ENCODE measurements at regions of chr4 and their contacts with region 1.

Region 1: GRCh38 chr4:41814565-41814964 is 66.0 kb upstream of the PHOX2B start:
- DNase-seq: peak in 1 of 2 experiments; percentile 58
- H3K4me3 ChIP-seq: no peak overlapping the region
- H3K27ac ChIP-seq: no peak overlapping the region
- H3K4me1 ChIP-seq: no peaks in the 10 kb centered on the region
- H3K27me3 ChIP-seq: no peaks in the 10 kb centered on the region
- CTCF ChIP-seq: peak; percentile 61 to 78 (median 68)
- EP300 ChIP-seq: no peak
- POLR2A ChIP-seq: no peak
- RAD21 ChIP-seq: peak; percentile 73 to 75

Region 2: GRCh38 chr4:41692717-41693345 is 121.7 kb before region 1 on chr4:
- CTCF ChIA-PET with region 1: interaction called, 19 read pairs
- POLR2A ChIA-PET with region 1: no interaction called
- DNase-seq: peak; percentile 25 to 72
- H3K4me3 ChIP-seq: peak overlapping the region in 1 of 4 experiments; percentile 19; a peak in 1 of 8 replicates
- H3K27ac ChIP-seq: no peak overlapping the region
- H3K4me1 ChIP-seq: no peaks in the 10 kb centered on the region
- H3K27me3 ChIP-seq: no peaks in the 10 kb centered on the region
- CTCF ChIP-seq: peak; percentile 86 to 92 (median 88)
- EP300 ChIP-seq: no peak
- POLR2A ChIP-seq: no peak
- RAD21 ChIP-seq: peak; percentile 96 to 97

Region 3: GRCh38 chr4:41791557-41791956 is 23.0 kb before region 1 on chr4:
- CTCF ChIA-PET with region 1: interaction called, 21 read pairs
- POLR2A ChIA-PET with region 1: interaction called, 3 read pairs
- DNase-seq: no peak
- H3K4me3 ChIP-seq: no peak overlapping the region
- H3K27ac ChIP-seq: no peak overlapping the region
- H3K4me1 ChIP-seq: peaks cover 3 to 9% (median 7%) of the 10 kb centered on the region in 4 experiments; a peak in 4 of 7 replicates
- H3K27me3 ChIP-seq: no peaks in the 10 kb centered on the region
- CTCF ChIP-seq: peak in 1 of 3 experiments; percentile 21; a peak in 1 of 4 replicates
- EP300 ChIP-seq: no peak
- POLR2A ChIP-seq: no peak
- RAD21 ChIP-seq: peak in 1 of 2 experiments; percentile 29; a peak in 1 of 4 replicates

Region 4: GRCh38 chr4:41796545-41797210 is 17.9 kb before region 1 on chr4:
- CTCF ChIA-PET with region 1: interaction called, 21 read pairs
- POLR2A ChIA-PET with region 1: interaction called, 3 read pairs
- DNase-seq: peak; percentile 39 to 63
- H3K4me3 ChIP-seq: peak overlapping the region in 3 of 4 experiments; percentile 10 to 28 (median 24); a peak in 3 of 8 replicates
- H3K27ac ChIP-seq: no peak overlapping the region
- H3K4me1 ChIP-seq: peaks cover 7 to 17% (median 12%) of the 10 kb centered on the region in 4 experiments; a peak in 6 of 7 replicates
- H3K27me3 ChIP-seq: no peaks in the 10 kb centered on the region
- CTCF ChIP-seq: no peak
- EP300 ChIP-seq: 0 out of 3 replicates have a peak, but pooled peaks of 1 of the 2 experiments have one; percentile 15
- POLR2A ChIP-seq: no peak
- RAD21 ChIP-seq: no peak